Right ventricle myocardium inferior (tissue), 1 donor: ENCODE measurements at regions of chr19 and their contacts with region 1.

Region 1: GRCh38 chr19:14571695-14572490 is at the start of gene NDUFB7:
- DNase-seq: peak; percentile 95
- ATAC-seq: peak; percentile 98
- total RNA-seq, gene NDUFB7: 529 TPM

Region 2: DNA sequence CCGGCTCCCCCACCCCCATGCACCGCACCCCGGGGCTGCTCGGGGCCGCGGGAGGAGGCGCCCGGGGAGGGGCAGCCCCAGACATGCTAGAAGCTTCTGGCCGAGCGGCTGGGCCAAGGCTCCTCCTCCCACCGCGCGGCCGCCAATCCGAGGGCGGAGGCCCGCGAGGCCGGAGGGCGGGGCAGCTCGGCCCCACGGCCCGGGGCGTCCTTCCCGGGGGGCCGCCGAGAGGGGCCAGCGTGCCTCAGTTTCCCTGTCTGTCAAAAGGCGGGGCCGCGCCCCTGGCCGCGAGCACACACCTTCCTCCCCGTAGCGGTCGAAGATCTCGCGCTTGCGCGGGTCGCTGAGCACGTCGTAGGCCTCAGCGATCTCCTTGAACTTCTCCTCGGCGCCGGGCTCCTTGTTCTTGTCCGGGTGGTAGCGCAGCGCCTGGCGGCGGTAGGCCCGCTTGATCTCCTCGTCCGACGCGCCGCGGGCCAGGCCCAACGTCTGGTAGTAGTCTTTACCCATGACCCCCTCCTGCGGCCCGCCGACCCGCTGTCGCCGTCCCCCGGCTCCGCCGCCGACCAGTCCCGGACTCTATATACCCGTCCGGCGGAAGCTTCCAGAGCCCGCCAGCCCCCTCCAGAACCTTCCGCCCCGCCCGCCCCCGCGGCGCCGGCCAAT is 53.9 kb before region 1 on chr19 and contains the start of gene DNAJB1:
- intact Hi-C with region 1: loop called (anchors 5 kb)
- DNase-seq: peak; percentile 90
- ATAC-seq: peak; percentile 85
- total RNA-seq, gene DNAJB1: 46.9 TPM

Region 3: DNA sequence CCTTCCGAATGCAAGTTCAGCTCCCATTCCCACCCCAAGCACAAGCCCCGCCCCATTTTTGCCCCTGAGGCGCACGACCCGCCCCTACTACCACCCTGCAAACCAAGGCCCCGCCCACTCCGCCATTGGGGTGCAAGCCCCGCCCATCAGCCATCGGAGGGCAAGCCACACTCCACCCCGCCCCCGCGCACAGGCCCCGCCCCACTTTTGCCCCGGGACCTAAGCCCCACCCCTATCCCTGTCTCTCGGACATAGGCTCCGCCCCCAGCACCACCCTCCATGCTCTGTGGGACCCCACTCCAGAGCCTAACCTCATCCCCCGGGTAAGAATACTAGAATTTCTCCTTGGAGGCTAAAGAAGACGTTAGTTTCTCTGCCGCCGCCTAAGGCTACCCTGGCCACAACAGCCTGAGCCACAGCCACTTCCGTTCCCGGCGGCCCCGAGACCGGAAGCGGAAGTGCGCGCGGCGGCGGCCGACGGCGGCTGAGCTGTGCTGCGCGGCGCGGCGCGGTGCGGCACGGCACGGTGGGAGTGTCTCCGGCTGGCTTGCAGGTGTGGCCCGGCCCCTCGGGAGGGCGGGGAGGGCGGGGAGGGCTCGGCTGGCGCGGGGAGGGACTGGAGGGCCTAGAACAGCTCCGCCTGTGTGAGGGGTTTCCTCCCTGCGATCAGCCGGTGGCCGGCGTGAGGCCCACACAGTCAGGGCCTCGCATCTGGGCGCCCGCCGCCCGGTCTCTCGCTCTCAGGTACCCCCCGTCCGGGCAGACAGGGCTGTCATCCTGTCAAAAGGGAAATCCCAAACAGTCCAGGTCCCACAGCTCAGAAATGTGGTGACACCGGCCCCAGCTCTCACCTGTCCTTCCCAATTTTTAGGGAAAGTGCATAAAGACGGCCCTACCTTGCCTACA is 118.0 kb after region 1 on chr19 and contains the start of gene ZNF333:
- intact Hi-C with region 1: loop called (anchors 2 kb)
- DNase-seq: peak; percentile 99
- ATAC-seq: peak; percentile 99
- total RNA-seq, gene ZNF333: 6.1 TPM

Region 4: GRCh38 chr19:14889994-14890642 is 318.2 kb after region 1 on chr19:
- intact Hi-C with region 1: loop called (anchors 2 kb)
- DNase-seq: no peak
- ATAC-seq: no peak